PC-3 (cell line): ENCODE measurements at regions of chr6 and their contacts with region 1.

Region 1: DNA sequence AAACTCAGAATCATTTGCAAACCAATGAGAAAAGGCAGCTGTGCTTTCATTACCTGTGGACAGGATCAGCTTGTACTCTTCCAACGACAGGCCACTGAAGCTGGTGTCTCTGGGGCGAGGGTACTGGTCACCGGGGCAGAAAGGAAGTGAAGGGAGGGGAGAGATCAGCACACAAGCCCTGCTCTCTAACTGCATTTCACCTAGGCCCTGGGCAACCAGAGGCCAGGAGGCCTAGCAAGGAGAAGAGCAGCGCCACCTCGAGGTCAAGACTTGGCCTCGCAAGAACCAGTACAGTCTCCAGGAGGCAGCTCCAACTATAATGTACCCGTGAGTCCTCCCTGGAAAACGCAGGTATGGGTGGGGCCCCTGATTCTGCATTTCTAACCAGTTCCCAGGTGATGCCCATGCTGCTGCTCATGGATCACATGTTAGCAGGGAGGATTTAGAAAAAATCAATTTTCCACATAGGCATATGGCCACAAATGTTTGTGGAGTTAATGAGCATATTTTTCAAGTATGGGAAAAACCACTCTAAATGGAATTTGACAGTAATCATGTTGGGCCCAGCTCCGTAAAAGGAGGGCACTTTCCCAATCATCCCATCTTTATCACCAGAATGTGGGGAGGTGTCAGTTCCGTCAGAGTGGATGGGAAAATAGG is 11.0 kb downstream of the UQCC2 start:
- DNase-seq: peak; percentile 78
- ATAC-seq: peak; percentile 61
- H3K4me3 ChIP-seq: no peak overlapping the region
- H3K27ac ChIP-seq: no peak overlapping the region
- H3K4me1 ChIP-seq: peaks cover 23% of the 10 kb centered on the region
- H3K27me3 ChIP-seq: no peaks in the 10 kb centered on the region
- CTCF ChIP-seq: peak; percentile 91

Region 2: DNA sequence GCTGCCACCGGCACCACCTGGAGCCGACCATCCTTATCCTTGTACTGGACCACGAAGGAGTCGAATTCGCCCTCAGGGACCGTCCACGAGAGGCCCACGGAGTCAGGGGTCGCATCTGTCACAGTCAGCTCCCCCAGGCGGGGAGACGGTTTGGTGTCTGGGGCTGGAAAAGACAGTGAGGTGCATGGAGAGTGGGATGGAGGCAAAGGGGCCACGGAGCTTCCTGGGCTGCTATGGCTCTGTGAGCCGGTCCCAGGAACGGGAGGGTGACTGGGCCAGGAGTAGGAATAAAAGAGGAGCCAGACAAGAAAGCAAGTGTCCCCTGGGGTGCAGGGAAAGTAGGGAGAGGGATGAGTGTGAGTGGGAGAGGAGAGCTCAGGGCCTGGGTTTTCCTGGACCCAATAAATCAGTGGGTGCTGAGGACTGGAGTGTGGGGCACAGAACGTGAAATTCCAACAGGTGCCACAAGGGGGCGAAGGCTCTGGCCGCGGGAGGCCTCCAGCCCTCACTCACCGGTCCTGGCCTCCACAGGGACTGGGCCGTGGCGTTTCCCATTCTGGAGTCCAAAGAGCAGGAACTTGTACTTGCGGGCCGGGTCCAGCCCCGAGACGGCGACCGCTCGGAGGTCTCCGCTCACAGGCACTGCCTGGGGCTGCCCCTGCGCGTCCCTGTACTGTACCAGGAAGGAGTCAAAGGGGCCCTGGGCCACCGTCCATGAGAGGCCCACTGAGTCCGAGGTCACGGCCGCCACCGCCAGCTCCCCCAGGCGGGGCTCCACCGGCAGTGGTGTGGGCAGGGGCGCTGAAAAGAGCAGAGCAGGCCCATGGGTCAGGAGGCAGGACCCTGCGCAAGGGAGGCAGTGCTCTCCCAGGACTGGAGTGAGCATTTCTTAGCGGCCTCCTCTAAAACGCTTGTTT is 1652.4 kb before region 1 on chr6:
- CTCF ChIA-PET with region 1: no interaction called
- POLR2A ChIA-PET with region 1: no interaction called
- intact Hi-C with region 1: no loop called
- DNase-seq: peak; percentile 73
- ATAC-seq: peak; percentile 69
- H3K4me3 ChIP-seq: no peak overlapping the region
- H3K27ac ChIP-seq: peak overlapping the region; percentile 49; the same call in 1 of the 2 replicates
- H3K4me1 ChIP-seq: peaks cover 20% of the 10 kb centered on the region
- H3K27me3 ChIP-seq: no peaks in the 10 kb centered on the region
- CTCF ChIP-seq: peak; percentile 75

Region 3: GRCh38 chr6:33633462-33634158 is 66.9 kb before region 1 on chr6:
- CTCF ChIA-PET with region 1: no interaction called
- POLR2A ChIA-PET with region 1: no interaction called
- intact Hi-C with region 1: loop called (anchors 5 kb)
- DNase-seq: peak; percentile 49
- ATAC-seq: peak; percentile 83
- H3K4me3 ChIP-seq: peak overlapping the region; percentile 64
- H3K27ac ChIP-seq: no peak overlapping the region
- H3K4me1 ChIP-seq: peaks cover 7% of the 10 kb centered on the region
- H3K27me3 ChIP-seq: no peaks in the 10 kb centered on the region
- CTCF ChIP-seq: no peak